Activated T-helper 2 cell treated with anti-CD3 and anti-CD28 coated beads, Interferon-gamma antibody, Interleukin-2, Interleukin-4, amounts not matched to agents 10 μg/mL and 5 μg/mL and 100 μg/mL, durations not matched to agents 14 hours and 24 hours and 36 hours (primary cell): ENCODE measurements at regions of chr1 and their contacts with region 1.

Region 1: DNA sequence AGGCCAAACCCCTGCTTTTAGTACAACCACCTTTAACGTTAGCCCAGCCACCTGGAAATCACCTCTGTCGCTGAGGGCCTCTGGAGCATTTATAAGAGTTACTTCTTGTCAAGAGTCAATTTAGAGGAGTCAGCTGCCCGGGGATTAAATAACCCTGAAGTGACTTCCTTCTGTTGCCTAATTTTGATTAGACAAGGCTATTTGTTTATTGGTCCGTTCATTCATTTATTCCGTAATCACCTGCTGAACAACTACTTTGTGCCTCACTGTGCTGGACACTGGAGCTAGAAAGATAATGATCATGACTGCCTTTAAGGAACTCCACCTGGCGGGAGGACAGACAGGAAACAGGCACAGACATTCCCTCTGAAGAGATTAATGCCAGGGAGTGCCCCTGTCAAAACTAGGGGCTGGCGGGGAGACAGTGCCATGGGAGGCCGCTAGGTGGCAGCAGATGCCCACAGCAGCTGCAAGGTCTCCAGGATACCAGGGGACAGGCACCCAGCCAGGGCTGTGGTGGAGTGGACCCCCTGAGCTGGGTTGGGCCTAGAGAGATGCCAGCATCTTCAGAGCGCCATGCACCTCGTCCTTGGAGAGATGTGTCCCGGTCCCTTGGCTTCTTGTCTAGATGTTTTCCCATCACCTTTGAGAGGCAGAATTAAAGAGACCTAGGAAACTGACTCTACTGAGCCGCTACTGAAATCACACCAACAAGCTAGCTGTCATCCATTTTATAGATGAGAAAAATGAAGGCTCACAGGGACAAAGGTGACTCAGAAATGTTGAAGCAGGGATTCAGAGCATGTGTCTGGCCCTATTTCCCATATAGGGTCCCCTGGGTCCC is 3.7 kb downstream of the REN start:
- DNase-seq: peak; percentile 60
- H3K4me3 Mint-ChIP-seq: no peak overlapping the region
- H3K27ac Mint-ChIP-seq: no peak overlapping the region
- H3K4me1 Mint-ChIP-seq: peaks cover 2% of the 10 kb centered on the region
- H3K27me3 Mint-ChIP-seq: peaks cover 2% of the 10 kb centered on the region

Region 2: DNA sequence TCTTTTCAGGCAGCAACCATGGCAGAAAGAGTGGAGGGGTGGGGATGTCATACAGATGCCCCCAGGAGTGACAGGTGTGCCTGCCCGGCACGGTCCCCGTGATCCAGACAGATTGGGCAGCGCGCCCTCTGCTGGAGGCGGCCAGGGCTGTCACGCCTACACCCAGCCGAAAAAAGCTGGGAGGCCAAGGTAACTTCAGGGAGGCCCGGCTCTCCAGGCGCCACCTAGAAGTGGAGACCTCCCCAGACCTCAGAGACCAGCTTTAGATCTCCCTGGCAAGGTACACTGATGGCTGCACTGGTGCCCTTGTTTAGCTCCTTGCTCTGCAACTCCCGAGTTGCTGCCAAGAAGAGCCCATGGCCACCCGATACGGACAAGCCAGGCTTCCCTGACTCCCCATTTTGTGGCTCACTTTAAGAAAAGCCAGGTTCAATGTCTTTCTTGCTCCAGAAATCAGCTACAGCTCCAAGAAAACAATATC is 44.7 kb after region 1 on chr1:
- intact Hi-C with region 1: loop called (anchors 1 kb)
- DNase-seq: peak; percentile 54
- H3K4me3 Mint-ChIP-seq: no peak overlapping the region
- H3K27ac Mint-ChIP-seq: no peak overlapping the region
- H3K4me1 Mint-ChIP-seq: peaks cover 4% of the 10 kb centered on the region
- H3K27me3 Mint-ChIP-seq: peaks cover 30% of the 10 kb centered on the region

Region 3: DNA sequence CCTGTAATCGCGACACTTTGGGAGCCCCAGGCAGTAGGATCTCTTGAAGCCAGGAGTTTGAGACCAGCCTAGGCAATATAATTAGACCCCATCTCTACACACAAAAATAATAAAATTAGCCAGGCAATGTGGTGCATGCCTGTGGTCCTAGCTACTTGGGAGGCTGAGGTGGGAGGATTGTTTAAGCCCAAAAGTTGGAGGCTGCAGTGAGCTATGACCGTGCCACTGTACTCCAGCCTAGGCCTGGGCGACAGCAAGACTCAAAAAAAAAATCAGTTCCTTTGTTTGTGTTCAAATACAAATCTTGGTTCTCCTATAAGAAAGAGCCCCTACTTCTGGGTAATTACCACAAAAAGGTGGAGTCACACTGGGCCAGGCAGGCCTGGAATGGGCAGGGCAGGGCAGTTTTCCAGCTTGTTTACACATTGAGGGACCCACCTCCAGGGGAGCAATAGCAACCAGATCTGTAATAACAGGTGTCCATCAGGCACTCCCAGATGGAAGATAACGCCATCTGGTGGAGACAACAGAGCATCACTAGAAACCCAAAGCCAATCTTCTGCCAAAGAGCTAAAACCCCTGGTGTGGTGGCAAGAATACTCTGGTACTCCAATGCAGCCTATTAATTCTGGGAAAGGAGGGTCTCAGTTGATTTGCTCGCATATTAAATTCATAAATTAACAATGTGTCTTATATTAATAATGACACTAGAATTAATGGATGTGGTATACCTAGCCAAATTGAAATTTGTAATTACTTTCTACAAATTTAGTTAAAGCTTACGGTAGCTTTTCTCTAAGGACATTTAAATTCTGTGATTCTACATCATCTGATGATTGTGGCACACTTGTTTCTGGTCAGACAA is 236.0 kb after region 1 on chr1:
- intact Hi-C with region 1: loop called (anchors 1 kb)
- DNase-seq: peak; percentile 50
- H3K4me3 Mint-ChIP-seq: no peak overlapping the region
- H3K27ac Mint-ChIP-seq: no peak overlapping the region
- H3K4me1 Mint-ChIP-seq: peaks cover 7% of the 10 kb centered on the region
- H3K27me3 Mint-ChIP-seq: no peaks in the 10 kb centered on the region

Region 4: DNA sequence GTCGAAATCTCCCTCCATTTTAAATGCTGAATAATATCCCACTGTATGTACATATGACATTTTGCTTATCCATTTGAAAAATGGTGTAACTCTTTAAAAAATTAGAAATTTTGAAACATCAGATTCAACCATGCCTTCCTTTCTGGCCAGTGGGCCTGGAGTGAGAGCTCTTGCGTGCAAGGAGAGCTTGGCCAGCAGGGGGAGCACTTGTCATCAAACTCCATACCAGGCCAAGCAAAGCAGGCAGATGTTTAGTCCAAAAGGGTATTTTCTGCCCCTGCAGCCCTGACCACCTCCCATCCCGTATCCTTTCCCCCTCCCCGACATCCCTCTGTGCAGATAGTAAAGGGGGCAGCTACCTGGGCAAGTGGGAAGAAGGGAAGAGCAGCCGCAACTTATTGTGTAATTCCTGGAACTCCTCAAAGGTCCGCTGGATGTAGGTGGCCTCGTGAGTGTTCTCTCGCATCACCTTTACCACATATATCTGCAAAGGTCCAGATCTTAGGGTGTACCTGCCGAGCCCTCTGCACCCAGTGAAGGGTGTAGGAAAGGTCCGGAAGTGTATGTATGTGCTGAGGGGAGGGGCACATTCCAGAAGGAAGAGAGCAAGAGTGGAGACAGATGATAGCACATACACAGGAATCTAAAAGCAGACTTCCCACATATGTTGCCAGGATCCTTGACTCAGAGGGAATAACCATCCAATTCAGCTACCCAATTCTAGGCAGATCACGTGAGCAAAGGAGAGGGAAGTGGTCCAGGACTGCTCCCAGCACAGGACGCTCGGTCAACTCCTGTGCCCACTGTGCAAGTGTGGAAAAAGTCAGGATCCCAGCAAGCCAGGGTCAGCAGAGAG is 269.1 kb after region 1 on chr1:
- intact Hi-C with region 1: no loop called
- DNase-seq: peak; percentile 63
- H3K4me3 Mint-ChIP-seq: no peak overlapping the region
- H3K27ac Mint-ChIP-seq: no peak overlapping the region
- H3K4me1 Mint-ChIP-seq: no peaks in the 10 kb centered on the region
- H3K27me3 Mint-ChIP-seq: no peaks in the 10 kb centered on the region